ENCODE measurements at regions of chr7 and their contacts with region 1.

Region 1: GRCh38 chr7:7681179-7681935 is 37.0 kb downstream of the RPA3 start:
- DNase-seq: peak in 2 of 4 experiments; percentile 22 to 62
- ATAC-seq: peak; percentile 88
- H3K4me3 ChIP-seq: no peak overlapping the region
- H3K27ac ChIP-seq: peak overlapping the region; percentile 32; the same call in 1 of the 3 replicates
- H3K4me1 ChIP-seq: peaks cover 0 to 2% of the 10 kb centered on the region in 2 experiments; a peak in 1 of 5 replicates
- H3K27me3 ChIP-seq: no peaks in the 10 kb centered on the region
- CTCF ChIP-seq: peak; percentile 21 to 66 (median 46); a peak in 4 of 6 replicates
- EP300 ChIP-seq: no peak
- POLR2A ChIP-seq: no peak
- RAD21 ChIP-seq: peak; percentile 77 to 84

Region 2: GRCh38 chr7:7190142-7190541 is 491.2 kb before region 1 on chr7:
- CTCF ChIA-PET with region 1: no interaction called
- POLR2A ChIA-PET with region 1: no interaction called
- in situ Hi-C with region 1: no loop called
- intact Hi-C with region 1: no loop called
- DNase-seq: peak; percentile 7 to 48 (median 34)
- ATAC-seq: peak; percentile 72
- H3K4me3 ChIP-seq: no peak overlapping the region
- H3K27ac ChIP-seq: peak overlapping the region; percentile 30; the same call in 1 of the 3 replicates
- H3K4me1 ChIP-seq: peaks cover 0 to 6% of the 10 kb centered on the region in 2 experiments; a peak in 2 of 5 replicates
- H3K27me3 ChIP-seq: no peaks in the 10 kb centered on the region
- CTCF ChIP-seq: no peak
- EP300 ChIP-seq: no peak
- POLR2A ChIP-seq: no peak
- RAD21 ChIP-seq: no peak

Region 3: GRCh38 chr7:7521259-7521658 is 160.1 kb before region 1 on chr7:
- CTCF ChIA-PET with region 1: no interaction called
- POLR2A ChIA-PET with region 1: no interaction called
- in situ Hi-C with region 1: no loop called
- intact Hi-C with region 1: no loop called
- DNase-seq: peak in 2 of 4 experiments; percentile 6 to 33
- ATAC-seq: peak; percentile 75; the same call in 2 of the 3 replicates
- H3K4me3 ChIP-seq: no peak overlapping the region
- H3K27ac ChIP-seq: no peak overlapping the region
- H3K4me1 ChIP-seq: no peaks in the 10 kb centered on the region
- H3K27me3 ChIP-seq: no peaks in the 10 kb centered on the region
- CTCF ChIP-seq: peak in 2 of 3 experiments; percentile 32 to 36; a peak in 2 of 6 replicates
- EP300 ChIP-seq: no peak
- POLR2A ChIP-seq: no peak
- RAD21 ChIP-seq: peak; percentile 30 to 57; a peak in 3 of 4 replicates

Region 4: GRCh38 chr7:7577888-7578287 is 103.5 kb before region 1 on chr7:
- CTCF ChIA-PET with region 1: no interaction called
- POLR2A ChIA-PET with region 1: no interaction called
- in situ Hi-C with region 1: no loop called
- intact Hi-C with region 1: no loop called
- DNase-seq: no peak
- ATAC-seq: peak; percentile 65
- H3K4me3 ChIP-seq: no peak overlapping the region
- H3K27ac ChIP-seq: no peak overlapping the region
- H3K4me1 ChIP-seq: 0 out of 5 replicates have a peak, but pooled peaks cover 0 to 3% of the 10 kb centered on the region in 2 experiments
- H3K27me3 ChIP-seq: no peaks in the 10 kb centered on the region
- CTCF ChIP-seq: no peak
- EP300 ChIP-seq: no peak
- POLR2A ChIP-seq: no peak
- RAD21 ChIP-seq: no peak

Region 5: DNA sequence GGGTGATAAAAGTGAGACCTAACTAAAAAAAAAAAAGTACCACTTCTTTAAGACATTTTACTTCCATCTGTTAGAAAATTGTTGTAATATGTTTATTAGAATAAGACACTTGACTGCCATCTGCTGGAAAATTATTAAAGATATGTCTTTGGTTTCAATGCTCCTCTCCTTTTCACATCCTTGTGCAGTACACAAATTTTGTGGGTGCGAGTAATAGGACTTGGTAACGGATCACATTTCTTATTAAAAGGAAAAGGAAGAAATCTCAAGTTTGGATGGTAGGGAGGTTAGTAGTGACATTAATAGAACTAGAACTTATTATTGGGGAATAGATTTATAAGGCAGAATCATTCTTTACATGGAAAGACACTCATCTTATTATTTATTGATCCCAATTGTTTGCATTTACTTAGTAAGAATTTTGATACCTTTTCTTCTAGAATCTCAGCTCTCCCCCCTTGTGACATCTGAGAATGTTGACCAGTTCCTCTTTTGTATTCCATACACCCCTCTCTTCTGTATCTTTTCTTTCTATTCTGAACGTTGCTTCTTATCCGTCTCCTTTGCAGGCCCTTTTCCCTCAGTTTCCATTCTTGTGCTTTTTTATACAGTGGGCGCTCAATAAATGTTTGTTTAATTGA is 80.1 kb after region 1 on chr7:
- CTCF ChIA-PET with region 1: no interaction called
- POLR2A ChIA-PET with region 1: no interaction called
- in situ Hi-C with region 1: no loop called
- intact Hi-C with region 1: loop called (anchors 1 kb)
- DNase-seq: peak in 3 of 4 experiments; percentile 8 to 31 (median 10)
- ATAC-seq: peak; percentile 69; the same call in 2 of the 3 replicates
- H3K4me3 ChIP-seq: no peak overlapping the region
- H3K27ac ChIP-seq: no peak overlapping the region
- H3K4me1 ChIP-seq: no peaks in the 10 kb centered on the region; a peak in 1 of 5 replicates
- H3K27me3 ChIP-seq: no peaks in the 10 kb centered on the region
- CTCF ChIP-seq: peak in 1 of 3 experiments; percentile 42; a peak in 3 of 6 replicates
- EP300 ChIP-seq: no peak
- POLR2A ChIP-seq: no peak
- RAD21 ChIP-seq: peak; percentile 18 to 40; a peak in 2 of 4 replicates

Region 6: DNA sequence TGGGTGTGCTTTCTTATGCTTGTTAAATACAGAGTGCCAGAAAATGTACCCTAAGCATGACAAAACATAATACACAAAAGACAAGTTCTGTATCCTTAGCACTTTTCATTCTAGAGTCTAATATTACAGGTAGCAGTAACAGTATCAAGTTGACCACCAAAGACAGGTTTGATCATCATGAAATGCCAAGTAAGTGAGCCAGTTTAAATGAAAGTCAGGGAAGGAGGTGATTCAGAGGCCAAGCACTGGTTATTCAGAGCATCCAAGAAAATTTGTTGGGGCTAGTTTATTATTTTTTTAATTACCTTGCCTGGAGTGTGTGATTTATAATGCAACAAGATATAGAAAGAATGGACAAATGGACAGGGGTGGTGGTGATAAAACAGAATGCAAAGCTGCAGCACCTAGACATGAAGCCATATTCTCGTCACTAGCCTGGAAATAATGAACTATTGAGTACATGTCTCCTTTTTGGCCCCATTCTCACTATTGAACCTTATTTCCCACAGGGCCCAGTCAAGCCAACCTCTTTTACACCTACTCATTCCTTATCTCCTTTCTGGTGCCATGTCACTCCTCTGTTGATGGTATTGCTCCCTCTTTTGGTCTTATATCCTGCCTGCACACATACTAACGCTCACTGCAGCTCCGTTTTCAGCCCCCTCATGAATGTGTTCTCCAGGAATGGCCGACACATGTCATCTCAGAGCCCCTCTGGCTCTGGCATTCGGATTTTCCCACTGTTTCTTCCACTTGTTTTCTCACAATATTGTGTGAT is 208.6 kb after region 1 on chr7:
- CTCF ChIA-PET with region 1: no interaction called
- POLR2A ChIA-PET with region 1: no interaction called
- in situ Hi-C with region 1: no loop called
- intact Hi-C with region 1: loop called (anchors 5 kb)
- DNase-seq: peak in 2 of 4 experiments; percentile 17 to 20
- ATAC-seq: peak; percentile 74
- H3K4me3 ChIP-seq: no peak overlapping the region
- H3K27ac ChIP-seq: no peak overlapping the region
- H3K4me1 ChIP-seq: no peaks in the 10 kb centered on the region
- H3K27me3 ChIP-seq: no peaks in the 10 kb centered on the region
- CTCF ChIP-seq: peak; percentile 16 to 45 (median 36); a peak in 3 of 6 replicates
- EP300 ChIP-seq: peak; percentile 9; the same call in 1 of the 2 replicates
- POLR2A ChIP-seq: no peak
- RAD21 ChIP-seq: peak in 1 of 2 experiments; percentile 46; a peak in 2 of 4 replicates

Region 7: DNA sequence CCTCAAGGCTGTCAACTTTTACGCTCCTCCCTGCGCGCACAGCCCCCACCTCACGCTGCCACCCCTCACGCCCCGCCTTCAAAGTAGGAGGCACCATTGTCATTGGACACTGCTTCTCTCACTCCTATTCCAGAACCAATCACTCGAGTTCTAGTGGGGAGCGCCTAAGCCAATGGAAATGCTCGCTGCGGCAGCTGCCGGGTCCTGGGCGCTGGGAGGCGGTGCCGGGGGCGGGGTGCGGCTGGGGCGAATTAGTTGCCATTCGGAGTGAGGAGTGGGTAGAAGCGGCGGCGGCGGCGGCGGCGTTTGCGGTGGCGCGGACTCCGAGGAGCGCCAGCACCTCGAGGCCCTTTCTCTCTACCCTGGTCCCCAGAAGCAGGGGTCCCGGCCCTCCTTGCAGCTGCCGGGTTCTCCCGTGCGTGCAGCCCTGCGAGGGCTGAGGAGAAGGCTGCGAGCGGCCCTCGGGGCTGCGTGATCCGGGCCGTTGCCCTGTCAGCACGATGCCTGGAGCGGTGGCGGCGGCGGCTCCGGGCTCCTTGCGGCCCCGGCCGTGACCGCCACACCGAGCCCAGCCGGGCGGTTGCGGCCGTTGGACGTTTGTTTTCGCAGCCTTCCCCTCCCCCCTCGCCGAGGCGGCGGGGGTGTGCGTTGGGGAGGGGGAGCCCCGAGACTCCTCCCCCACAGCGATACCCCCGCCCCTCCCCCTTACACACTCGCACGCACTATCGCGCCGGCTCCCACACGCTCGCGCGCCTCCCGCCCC is 287.4 kb after region 1 on chr7 and contains the start of gene GLCCI1:
- CTCF ChIA-PET with region 1: no interaction called
- POLR2A ChIA-PET with region 1: no interaction called
- in situ Hi-C with region 1: no loop called
- intact Hi-C with region 1: loop called (anchors 10 kb)
- DNase-seq: peak; percentile 94 to 98 (median 96)
- ATAC-seq: peak; percentile 97
- H3K4me3 ChIP-seq: peak within 1 kb of the TSS; percentile 84
- H3K27ac ChIP-seq: peak within 1 kb of the TSS; percentile 94
- H3K4me1 ChIP-seq: peaks cover 6 to 11% of the 10 kb centered on the region in 2 experiments; a peak in 4 of 5 replicates
- H3K27me3 ChIP-seq: no peaks in the 10 kb centered on the region
- CTCF ChIP-seq: no peak
- EP300 ChIP-seq: no peak
- POLR2A ChIP-seq: peak; percentile 93
- RAD21 ChIP-seq: no peak
- polyA plus RNA-seq, gene GLCCI1: 2.7 TPM

Region 8: DNA sequence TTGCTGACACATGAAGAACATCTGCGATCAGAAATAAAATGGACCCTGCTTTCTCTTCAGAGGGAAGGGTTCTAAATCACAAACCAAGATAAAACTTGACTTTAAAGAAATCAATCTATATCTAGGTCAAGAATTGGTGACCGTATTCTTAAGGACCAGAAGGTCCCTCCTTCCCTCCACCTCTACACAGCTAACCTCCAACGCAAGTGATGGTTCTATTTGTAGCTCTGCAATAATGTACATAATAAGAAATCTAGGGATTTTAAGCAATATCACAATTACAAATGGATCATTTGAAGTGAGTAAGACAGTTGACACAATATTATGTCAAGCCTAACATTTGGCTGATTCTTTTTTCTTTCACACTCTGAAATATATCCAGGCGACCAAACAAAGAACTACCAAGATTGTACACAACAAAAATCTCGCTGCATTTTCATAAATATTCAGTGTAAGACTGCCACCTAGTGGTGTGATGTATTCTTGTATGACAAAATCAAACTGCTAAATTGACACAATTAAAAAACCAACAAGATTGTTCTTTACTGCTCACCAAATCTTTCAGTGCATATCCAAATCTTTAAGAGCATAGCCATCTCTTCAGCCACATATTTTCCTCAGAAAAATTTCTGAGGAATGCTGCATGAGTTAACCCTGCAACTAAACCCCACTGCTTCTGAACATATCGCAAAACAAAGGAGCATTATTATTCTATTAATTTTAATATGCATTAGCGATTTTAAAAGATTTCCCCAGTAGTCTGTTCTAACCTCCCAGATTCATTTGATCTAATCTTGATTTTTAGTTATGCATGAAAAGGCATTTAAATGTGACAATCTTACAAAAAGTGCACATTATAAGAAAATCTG is 536.1 kb after region 1 on chr7:
- CTCF ChIA-PET with region 1: no interaction called
- POLR2A ChIA-PET with region 1: no interaction called
- in situ Hi-C with region 1: no loop called
- intact Hi-C with region 1: loop called (anchors 5 kb)
- DNase-seq: peak; percentile 38 to 74 (median 39)
- ATAC-seq: peak; percentile 70
- H3K4me3 ChIP-seq: no peak overlapping the region
- H3K27ac ChIP-seq: no peak overlapping the region
- H3K4me1 ChIP-seq: no peaks in the 10 kb centered on the region
- H3K27me3 ChIP-seq: no peaks in the 10 kb centered on the region
- CTCF ChIP-seq: peak; percentile 35 to 74 (median 53); a peak in 4 of 6 replicates
- EP300 ChIP-seq: no peak
- POLR2A ChIP-seq: no peak
- RAD21 ChIP-seq: peak; percentile 85 to 86